Motor neuron (in vitro differentiated cells): ENCODE measurements at regions of chr2 and their contacts with region 1.

Region 1: GRCh38 chr2:24084386-24085361 is at the start of gene TP53I3:
- ATAC-seq: peak; percentile 74 to 97 (median 94)
- H3K4me3 ChIP-seq: peak within 1 kb of the TSS; percentile 32 to 48 (median 45)
- H3K27ac ChIP-seq: peak within 1 kb of the TSS; percentile 67 to 89
- H3K4me1 ChIP-seq: peaks cover 4 to 8% of the 10 kb centered on the region in 2 donors
- total RNA-seq, gene TP53I3: 7.5 to 177 (median 30.4) TPM

Region 2: DNA sequence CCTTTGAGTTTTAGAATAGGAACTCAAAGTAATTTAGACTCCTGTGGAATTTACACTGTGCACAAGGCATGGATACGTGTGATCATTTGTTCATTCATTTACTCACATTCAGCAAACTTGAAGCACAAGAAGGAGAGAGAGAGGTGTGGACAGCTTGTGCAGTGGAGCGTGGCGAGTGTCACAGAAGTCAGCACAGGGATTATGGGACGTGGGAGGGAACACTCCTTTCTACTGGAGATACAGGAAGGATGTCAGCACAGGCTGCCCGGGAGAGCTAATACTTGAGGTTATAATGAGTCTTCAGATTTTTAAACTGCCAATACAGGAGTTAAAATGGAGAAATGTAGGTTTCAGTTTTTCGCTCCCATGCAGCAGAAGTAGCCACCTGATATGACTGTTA is 97.2 kb after region 1 on chr2:
- in situ Hi-C with region 1: loop called in 1 of 9 experiments (anchors 25 kb)
- ATAC-seq: peak in 4 of 8 experiments; percentile 62 to 83 (median 67)
- H3K4me3 ChIP-seq: no peak overlapping the region
- H3K27ac ChIP-seq: no peak overlapping the region
- H3K4me1 ChIP-seq: no peaks in the 10 kb centered on the region

Region 3: GRCh38 chr2:24209389-24210105 is 124.9 kb after region 1 on chr2:
- in situ Hi-C with region 1: no loop called
- ATAC-seq: no peak
- H3K4me3 ChIP-seq: no peak overlapping the region
- H3K27ac ChIP-seq: no peak overlapping the region
- H3K4me1 ChIP-seq: no peaks in the 10 kb centered on the region